ENCODE measurements at regions of chr16 and their contacts with region 1.

Region 1: DNA sequence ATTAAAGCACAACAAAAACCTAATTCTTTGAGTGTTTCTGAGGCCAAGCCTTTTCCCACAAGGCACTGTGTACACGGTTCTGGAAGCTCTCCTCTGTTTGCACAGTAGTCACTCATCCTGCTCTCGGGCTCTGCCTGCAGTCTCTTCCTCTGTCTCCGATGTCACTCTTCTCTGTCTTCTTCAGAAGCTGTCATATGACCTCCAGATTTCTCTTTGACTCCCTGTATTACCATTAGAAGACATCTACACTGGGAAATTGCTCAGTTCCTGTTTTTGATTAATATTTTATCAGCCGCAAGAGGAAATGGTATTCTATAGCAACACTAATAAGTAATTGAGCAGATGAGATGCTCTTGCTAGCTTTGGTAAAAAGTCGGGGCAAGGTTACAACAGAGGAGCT is 422.9 kb downstream of the WWOX start:
- DNase-seq: no peak
- ATAC-seq: no peak
- H3K4me3 ChIP-seq: no peak overlapping the region
- H3K27ac ChIP-seq: no peak overlapping the region
- H3K4me1 ChIP-seq: no peaks in the 10 kb centered on the region
- H3K27me3 ChIP-seq: no peaks in the 10 kb centered on the region
- CTCF ChIP-seq: no peak

Region 2: DNA sequence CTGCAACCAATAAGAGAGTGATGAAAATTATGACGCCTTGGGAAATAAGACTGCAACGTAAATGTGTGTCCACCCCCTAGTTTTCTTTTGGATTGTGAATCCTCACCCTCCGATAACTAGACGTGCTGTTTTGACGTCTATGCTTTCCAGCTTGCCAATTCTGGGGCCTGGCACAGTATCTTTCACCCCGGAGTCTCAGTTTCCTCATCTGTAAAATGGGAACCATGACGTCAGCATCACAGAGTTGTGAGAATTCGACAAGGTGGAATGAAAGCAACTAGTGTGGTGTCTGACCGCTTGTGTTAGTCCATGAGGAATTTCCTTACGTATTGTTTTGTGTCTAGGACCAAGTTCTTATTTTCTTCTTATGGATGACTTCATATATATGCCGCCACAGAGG is 385.1 kb before region 1 on chr16:
- CTCF ChIA-PET with region 1: no interaction called
- POLR2A ChIA-PET with region 1: interaction called, 13 read pairs
- in situ Hi-C with region 1: no loop called
- intact Hi-C with region 1: no loop called
- DNase-seq: no peak
- ATAC-seq: no peak
- H3K4me3 ChIP-seq: no peak overlapping the region
- H3K27ac ChIP-seq: no peak overlapping the region
- H3K4me1 ChIP-seq: no peaks in the 10 kb centered on the region
- H3K27me3 ChIP-seq: no peaks in the 10 kb centered on the region
- CTCF ChIP-seq: no peak

Region 3: DNA sequence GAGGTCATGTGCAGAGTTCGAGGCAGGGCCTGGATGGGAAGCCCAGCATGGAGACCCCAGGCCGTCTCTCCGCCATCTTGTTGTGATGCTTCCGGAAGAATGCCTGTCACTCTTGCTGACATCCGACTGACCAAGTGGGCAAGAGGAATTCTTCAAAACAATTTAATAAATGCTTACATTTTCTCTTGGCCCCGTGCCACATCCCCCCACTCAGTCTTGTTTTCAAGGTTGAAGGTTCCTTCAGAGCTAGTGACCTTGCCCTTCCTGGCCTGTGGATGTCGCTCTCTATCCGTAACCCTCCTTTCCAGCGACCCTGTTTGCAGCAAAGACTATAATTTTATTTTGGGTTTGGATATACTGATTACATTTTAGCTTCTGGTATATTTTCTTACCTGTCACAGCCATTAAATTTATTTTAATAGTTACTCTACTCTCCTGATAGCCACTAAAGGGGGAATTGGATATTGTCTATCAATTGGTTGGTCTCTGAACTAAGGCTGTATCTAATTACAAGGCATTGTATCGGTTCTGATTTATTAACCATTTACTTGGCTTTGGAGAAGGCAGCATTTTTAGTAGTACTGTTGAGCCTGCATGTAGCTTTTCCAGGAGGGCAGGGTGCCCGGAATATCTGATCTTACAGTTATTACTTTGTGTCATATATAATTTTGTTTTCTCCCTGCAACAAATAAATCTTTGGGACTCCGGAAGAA is 158.3 kb before region 1 on chr16:
- CTCF ChIA-PET with region 1: no interaction called
- POLR2A ChIA-PET with region 1: interaction called, 12 read pairs
- in situ Hi-C with region 1: no loop called
- intact Hi-C with region 1: no loop called
- DNase-seq: no peak
- ATAC-seq: no peak
- H3K4me3 ChIP-seq: no peak overlapping the region
- H3K27ac ChIP-seq: no peak overlapping the region
- H3K4me1 ChIP-seq: no peaks in the 10 kb centered on the region
- H3K27me3 ChIP-seq: no peaks in the 10 kb centered on the region
- CTCF ChIP-seq: no peak

Region 4: GRCh38 chr16:78591682-78592103 is 69.4 kb after region 1 on chr16:
- CTCF ChIA-PET with region 1: no interaction called
- POLR2A ChIA-PET with region 1: no interaction called
- in situ Hi-C with region 1: no loop called
- intact Hi-C with region 1: no loop called
- DNase-seq: no peak
- ATAC-seq: no peak
- H3K4me3 ChIP-seq: no peak overlapping the region
- H3K27ac ChIP-seq: no peak overlapping the region
- H3K4me1 ChIP-seq: no peaks in the 10 kb centered on the region
- H3K27me3 ChIP-seq: no peaks in the 10 kb centered on the region
- CTCF ChIP-seq: no peak